GM12878 (cell line): ENCODE measurements at regions of chr1 and their contacts with region 1.

Region 1: GRCh38 chr1:147273409-147274336 is 31.2 kb downstream of the CHD1L start:
- DNase-seq: peak; percentile 9
- ATAC-seq: peak; percentile 81
- H3K4me3 ChIP-seq: no peak overlapping the region
- H3K27ac ChIP-seq: no peak overlapping the region
- H3K4me1 ChIP-seq: no peaks in the 10 kb centered on the region
- H3K27me3 ChIP-seq: no peaks in the 10 kb centered on the region
- CTCF ChIP-seq: peak; percentile 47 to 65 (median 61); a peak in 5 of 6 replicates
- EP300 ChIP-seq: no peak
- POLR2A ChIP-seq: no peak
- RAD21 ChIP-seq: peak; percentile 71

Region 2: DNA sequence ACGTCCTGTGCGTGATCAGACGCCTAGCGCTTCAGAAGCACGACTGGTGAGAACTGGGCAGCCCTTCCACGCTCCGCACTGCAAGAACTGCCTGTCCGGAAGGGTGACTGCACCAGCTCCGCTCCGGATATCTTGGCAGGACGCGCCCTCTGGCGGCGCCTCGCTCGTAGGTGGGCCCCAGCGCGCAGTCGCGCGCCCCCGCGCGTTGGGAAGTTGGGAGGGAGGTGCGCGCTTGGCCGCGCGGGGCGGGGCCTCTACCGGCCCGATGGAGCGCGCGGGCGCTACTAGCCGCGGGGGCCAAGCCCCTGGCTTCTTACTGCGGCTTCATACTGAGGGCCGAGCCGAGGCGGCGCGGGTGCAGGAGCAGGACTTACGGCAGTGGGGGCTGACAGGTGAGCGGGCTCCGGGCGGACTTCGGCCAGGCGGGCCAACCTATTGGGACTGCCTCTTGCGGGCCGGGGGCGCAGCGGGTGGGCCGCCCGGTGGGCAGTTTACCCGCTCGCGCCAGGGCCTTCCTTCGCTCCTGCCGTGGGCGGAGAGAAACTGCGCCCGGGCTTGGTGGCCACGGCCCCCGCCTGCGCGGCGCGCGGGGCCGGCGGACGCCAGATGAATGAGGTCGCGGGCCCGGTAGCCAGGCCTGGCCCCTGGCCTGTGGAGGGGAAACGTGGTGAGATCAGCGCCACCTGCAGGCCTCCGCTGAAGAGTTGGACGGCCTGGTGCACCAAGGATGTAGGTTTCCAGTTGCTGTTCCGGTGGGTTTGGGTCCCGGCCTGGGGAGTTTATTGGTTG is 31.0 kb before region 1 on chr1 and contains the start of gene CHD1L:
- CTCF ChIA-PET with region 1: interaction called, 18 read pairs
- POLR2A ChIA-PET with region 1: no interaction called
- RAD21 ChIA-PET with region 1: interaction called, 7 read pairs
- SMC1A ChIA-PET with region 1: no interaction called
- in situ Hi-C with region 1: no loop called
- intact Hi-C with region 1: no loop called
- DNase-seq: peak; percentile 73
- ATAC-seq: peak; percentile 93
- H3K4me3 ChIP-seq: peak within 1 kb of the TSS; percentile 76
- H3K27ac ChIP-seq: peak within 1 kb of the TSS; percentile 70
- H3K4me1 ChIP-seq: peaks cover 16% of the 10 kb centered on the region
- H3K27me3 ChIP-seq: no peaks in the 10 kb centered on the region; a peak in 1 of 4 replicates
- CTCF ChIP-seq: peak; percentile 89 to 99 (median 93)
- EP300 ChIP-seq: 0 out of 4 replicates have a peak, but pooled peaks of 1 of the 2 experiments have one; percentile 32
- POLR2A ChIP-seq: peak; percentile 88
- RAD21 ChIP-seq: peak; percentile 89
- polyA plus RNA-seq, gene CHD1L: 21.2 to 33.0 TPM

Region 3: GRCh38 chr1:147287133-147287865 is 13.6 kb after region 1 on chr1:
- CTCF ChIA-PET with region 1: interaction called, 11 read pairs
- POLR2A ChIA-PET with region 1: no interaction called
- RAD21 ChIA-PET with region 1: no interaction called
- SMC1A ChIA-PET with region 1: interaction called, 5 read pairs
- in situ Hi-C with region 1: no loop called
- intact Hi-C with region 1: no loop called
- DNase-seq: no peak
- ATAC-seq: no peak
- H3K4me3 ChIP-seq: no peak overlapping the region
- H3K27ac ChIP-seq: no peak overlapping the region
- H3K4me1 ChIP-seq: no peaks in the 10 kb centered on the region
- H3K27me3 ChIP-seq: no peaks in the 10 kb centered on the region
- CTCF ChIP-seq: no peak
- EP300 ChIP-seq: no peak
- POLR2A ChIP-seq: no peak
- RAD21 ChIP-seq: no peak

Region 4: GRCh38 chr1:147389532-147390524 is 116.2 kb after region 1 on chr1:
- CTCF ChIA-PET with region 1: interaction called, 107 read pairs
- POLR2A ChIA-PET with region 1: interaction called, 3 read pairs
- RAD21 ChIA-PET with region 1: interaction called, 52 read pairs
- SMC1A ChIA-PET with region 1: interaction called, 48 read pairs
- in situ Hi-C with region 1: no loop called
- intact Hi-C with region 1: loop called (anchors 1 kb)
- DNase-seq: no peak
- ATAC-seq: peak; percentile 84
- H3K4me3 ChIP-seq: no peak overlapping the region
- H3K27ac ChIP-seq: no peak overlapping the region
- H3K4me1 ChIP-seq: no peaks in the 10 kb centered on the region
- H3K27me3 ChIP-seq: no peaks in the 10 kb centered on the region
- CTCF ChIP-seq: peak; percentile 66 to 77 (median 72)
- EP300 ChIP-seq: no peak
- POLR2A ChIP-seq: no peak
- RAD21 ChIP-seq: peak; percentile 69

Region 5: GRCh38 chr1:147463022-147463421 is 189.3 kb after region 1 on chr1:
- CTCF ChIA-PET with region 1: no interaction called
- POLR2A ChIA-PET with region 1: no interaction called
- RAD21 ChIA-PET with region 1: no interaction called
- SMC1A ChIA-PET with region 1: no interaction called
- in situ Hi-C with region 1: no loop called
- intact Hi-C with region 1: no loop called
- DNase-seq: no peak
- ATAC-seq: no peak
- H3K4me3 ChIP-seq: no peak overlapping the region
- H3K27ac ChIP-seq: no peak overlapping the region
- H3K4me1 ChIP-seq: no peaks in the 10 kb centered on the region
- H3K27me3 ChIP-seq: no peaks in the 10 kb centered on the region
- CTCF ChIP-seq: no peak
- EP300 ChIP-seq: no peak
- POLR2A ChIP-seq: no peak
- RAD21 ChIP-seq: no peak

Region 6: GRCh38 chr1:147890177-147890790 is 616.6 kb after region 1 on chr1:
- CTCF ChIA-PET with region 1: interaction called, 18 read pairs
- POLR2A ChIA-PET with region 1: no interaction called
- RAD21 ChIA-PET with region 1: interaction called, 3 read pairs
- SMC1A ChIA-PET with region 1: interaction called, 3 read pairs
- in situ Hi-C with region 1: loop called (anchors 5 kb)
- intact Hi-C with region 1: loop called (anchors 2 kb)
- DNase-seq: no peak
- ATAC-seq: peak; percentile 98
- H3K4me3 ChIP-seq: no peak overlapping the region
- H3K27ac ChIP-seq: no peak overlapping the region
- H3K4me1 ChIP-seq: no peaks in the 10 kb centered on the region
- H3K27me3 ChIP-seq: no peaks in the 10 kb centered on the region
- CTCF ChIP-seq: peak; percentile 74 to 77 (median 75)
- EP300 ChIP-seq: no peak
- POLR2A ChIP-seq: no peak
- RAD21 ChIP-seq: peak; percentile 78